ENCODE measurements at regions of chr19 and their contacts with region 1.

Region 1: GRCh38 chr19:41753936-41754529 is 1.3 kb upstream of the CEACAM6 start:
- DNase-seq: peak; percentile 79
- H3K4me3 Mint-ChIP-seq: no peak overlapping the region
- H3K27ac Mint-ChIP-seq: no peak overlapping the region
- H3K4me1 Mint-ChIP-seq: peaks cover 2% of the 10 kb centered on the region
- H3K27me3 Mint-ChIP-seq: peaks cover 77% of the 10 kb centered on the region

Region 2: DNA sequence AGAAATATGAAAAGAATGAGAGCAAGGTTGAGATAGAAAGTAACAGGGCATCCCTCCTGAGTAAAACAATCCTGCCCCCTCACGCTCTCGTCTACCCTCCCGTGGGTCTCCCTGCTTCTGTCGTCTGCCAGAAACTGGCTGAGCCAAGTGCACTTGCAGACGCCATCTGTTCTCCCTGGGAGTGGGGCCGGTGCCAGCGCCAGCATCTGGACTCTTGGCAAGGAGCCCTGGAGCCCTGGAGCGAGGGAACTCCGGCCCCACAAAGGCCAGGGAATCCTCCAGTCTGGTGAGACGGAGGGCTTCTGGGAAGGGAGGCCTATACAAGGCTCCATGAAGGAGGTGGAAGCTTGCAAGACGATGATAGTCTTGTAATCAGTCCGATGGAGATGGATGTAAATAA is 380.0 kb before region 1 on chr19:
- CTCF ChIA-PET with region 1: no interaction called
- DNase-seq: no peak
- H3K4me3 Mint-ChIP-seq: no peak overlapping the region
- H3K27ac Mint-ChIP-seq: no peak overlapping the region
- H3K4me1 Mint-ChIP-seq: peaks cover 19% of the 10 kb centered on the region
- H3K27me3 Mint-ChIP-seq: no peaks in the 10 kb centered on the region

Region 3: DNA sequence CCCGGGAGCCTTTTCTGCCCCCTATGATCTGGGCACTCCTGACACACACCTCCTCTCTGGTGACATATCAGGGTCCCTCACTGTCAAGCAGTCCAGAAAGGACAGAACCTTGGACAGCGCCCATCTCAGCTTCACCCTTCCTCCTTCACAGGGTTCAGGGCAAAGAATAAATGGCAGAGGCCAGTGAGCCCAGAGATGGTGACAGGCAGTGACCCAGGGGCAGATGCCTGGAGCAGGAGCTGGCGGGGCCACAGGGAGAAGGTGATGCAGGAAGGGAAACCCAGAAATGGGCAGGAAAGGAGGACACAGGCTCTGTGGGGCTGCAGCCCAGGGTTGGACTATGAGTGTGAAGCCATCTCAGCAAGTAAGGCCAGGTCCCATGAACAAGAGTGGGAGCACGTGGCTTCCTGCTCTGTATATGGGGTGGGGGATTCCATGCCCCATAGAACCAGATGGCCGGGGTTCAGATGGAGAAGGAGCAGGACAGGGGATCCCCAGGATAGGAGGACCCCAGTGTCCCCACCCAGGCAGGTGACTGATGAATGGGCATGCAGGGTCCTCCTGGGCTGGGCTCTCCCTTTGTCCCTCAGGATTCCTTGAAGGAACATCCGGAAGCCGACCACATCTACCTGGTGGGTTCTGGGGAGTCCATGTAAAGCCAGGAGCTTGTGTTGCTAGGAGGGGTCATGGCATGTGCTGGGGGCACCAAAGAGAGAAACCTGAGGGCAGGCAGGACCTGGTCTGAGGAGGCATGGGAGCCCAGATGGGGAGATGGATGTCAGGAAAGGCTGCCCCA is 57.4 kb before region 1 on chr19:
- CTCF ChIA-PET with region 1: no interaction called
- DNase-seq: peak; percentile 50
- H3K4me3 Mint-ChIP-seq: no peak overlapping the region
- H3K27ac Mint-ChIP-seq: no peak overlapping the region
- H3K4me1 Mint-ChIP-seq: no peaks in the 10 kb centered on the region
- H3K27me3 Mint-ChIP-seq: peaks cover 32% of the 10 kb centered on the region

Region 4: DNA sequence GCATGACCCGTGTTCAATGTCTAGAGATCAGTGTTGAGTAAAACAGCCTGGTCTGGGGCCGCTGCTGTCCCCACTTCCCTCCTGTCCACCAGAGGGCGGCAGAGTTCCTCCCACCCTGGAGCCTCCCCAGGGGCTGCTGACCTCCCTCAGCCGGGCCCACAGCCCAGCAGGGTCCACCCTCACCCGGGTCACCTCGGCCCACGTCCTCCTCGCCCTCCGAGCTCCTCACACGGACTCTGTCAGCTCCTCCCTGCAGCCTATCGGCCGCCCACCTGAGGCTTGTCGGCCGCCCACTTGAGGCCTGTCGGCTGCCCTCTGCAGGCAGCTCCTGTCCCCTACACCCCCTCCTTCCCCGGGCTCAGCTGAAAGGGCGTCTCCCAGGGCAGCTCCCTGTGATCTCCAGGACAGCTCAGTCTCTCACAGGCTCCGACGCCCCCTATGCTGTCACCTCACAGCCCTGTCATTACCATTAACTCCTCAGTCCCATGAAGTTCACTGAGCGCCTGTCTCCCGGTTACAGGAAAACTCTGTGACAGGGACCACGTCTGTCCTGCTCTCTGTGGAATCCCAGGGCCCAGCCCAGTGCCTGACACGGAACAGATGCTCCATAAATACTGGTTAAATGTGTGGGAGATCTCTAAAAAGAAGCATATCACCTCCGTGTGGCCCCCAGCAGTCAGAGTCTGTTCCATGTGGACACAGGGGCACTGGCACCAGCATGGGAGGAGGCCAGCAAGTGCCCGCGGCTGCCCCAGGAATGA is 47.1 kb before region 1 on chr19:
- CTCF ChIA-PET with region 1: interaction called, 14 read pairs
- DNase-seq: peak; percentile 80
- H3K4me3 Mint-ChIP-seq: peak overlapping the region; percentile 57
- H3K27ac Mint-ChIP-seq: no peak overlapping the region
- H3K4me1 Mint-ChIP-seq: peaks cover 5% of the 10 kb centered on the region
- H3K27me3 Mint-ChIP-seq: peaks cover 68% of the 10 kb centered on the region

Region 5: DNA sequence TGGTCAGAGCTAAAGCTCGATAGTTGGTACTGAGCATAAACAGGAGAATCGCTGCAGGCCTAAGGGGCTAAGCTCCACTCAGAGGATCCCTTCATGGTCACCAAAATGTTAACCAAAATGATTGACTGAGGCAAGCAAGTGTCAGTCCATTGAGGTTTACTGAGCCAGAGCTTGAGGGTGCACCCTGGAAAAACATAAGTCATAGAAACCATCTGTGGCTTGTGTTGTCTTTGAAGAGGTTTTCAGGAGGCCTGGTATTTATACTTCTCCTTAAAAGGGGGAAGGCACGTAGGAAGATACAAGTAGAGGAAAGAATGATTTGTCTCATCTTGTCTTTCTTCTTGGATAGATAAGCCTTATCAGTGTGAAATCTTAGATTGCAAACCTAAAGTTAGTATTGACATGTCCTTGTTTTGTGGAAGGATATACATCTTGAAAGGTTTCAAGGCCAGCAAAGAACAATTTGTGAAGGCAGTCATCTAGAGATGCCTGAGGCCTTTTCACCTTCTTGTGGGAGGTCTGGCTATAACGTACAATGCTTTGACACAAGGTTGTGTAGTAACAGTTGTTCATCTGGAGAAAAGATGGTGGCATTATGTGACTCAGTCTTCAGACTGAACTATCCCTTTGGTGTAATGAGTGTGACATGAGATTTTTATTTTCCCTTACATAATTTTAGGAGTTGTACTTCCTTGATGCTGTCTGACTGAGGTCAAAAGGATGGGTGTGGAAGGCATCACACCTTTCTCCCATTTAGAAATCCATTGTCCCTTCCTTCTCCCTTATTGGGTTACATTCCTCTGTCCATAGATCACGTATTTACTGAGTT is 13.4 kb before region 1 on chr19:
- CTCF ChIA-PET with region 1: interaction called, 14 read pairs
- DNase-seq: no peak
- H3K4me3 Mint-ChIP-seq: no peak overlapping the region
- H3K27ac Mint-ChIP-seq: no peak overlapping the region
- H3K4me1 Mint-ChIP-seq: peaks cover 22% of the 10 kb centered on the region
- H3K27me3 Mint-ChIP-seq: peaks cover 64% of the 10 kb centered on the region

Region 6: GRCh38 chr19:41785653-41786052 is 31.6 kb after region 1 on chr19:
- CTCF ChIA-PET with region 1: interaction called, 120 read pairs
- DNase-seq: peak; percentile 82
- H3K4me3 Mint-ChIP-seq: no peak overlapping the region
- H3K27ac Mint-ChIP-seq: no peak overlapping the region
- H3K4me1 Mint-ChIP-seq: peaks cover 17% of the 10 kb centered on the region
- H3K27me3 Mint-ChIP-seq: peaks cover 79% of the 10 kb centered on the region

Region 7: GRCh38 chr19:41821003-41821735 is 67.1 kb after region 1 on chr19:
- CTCF ChIA-PET with region 1: interaction called, 22 read pairs
- DNase-seq: peak; percentile 64
- H3K4me3 Mint-ChIP-seq: no peak overlapping the region
- H3K27ac Mint-ChIP-seq: no peak overlapping the region
- H3K4me1 Mint-ChIP-seq: no peaks in the 10 kb centered on the region
- H3K27me3 Mint-ChIP-seq: peaks cover 24% of the 10 kb centered on the region

Measured in activated naive CD4-positive, alpha-beta T cell treated with anti-CD3 and anti-CD28 coated beads, Interleukin-2, amount 10 ng/mL, durations not matched to agents 7 days and 5 days (primary cell).